Activated CD8-positive, alpha-beta T cell treated with anti-CD3 and anti-CD28 coated beads, Interleukin-2, amount 10 ng/mL, durations not matched to agents 7 days and 5 days (primary cell): ENCODE measurements at regions of chr15 and their contacts with region 1.

Region 1: DNA sequence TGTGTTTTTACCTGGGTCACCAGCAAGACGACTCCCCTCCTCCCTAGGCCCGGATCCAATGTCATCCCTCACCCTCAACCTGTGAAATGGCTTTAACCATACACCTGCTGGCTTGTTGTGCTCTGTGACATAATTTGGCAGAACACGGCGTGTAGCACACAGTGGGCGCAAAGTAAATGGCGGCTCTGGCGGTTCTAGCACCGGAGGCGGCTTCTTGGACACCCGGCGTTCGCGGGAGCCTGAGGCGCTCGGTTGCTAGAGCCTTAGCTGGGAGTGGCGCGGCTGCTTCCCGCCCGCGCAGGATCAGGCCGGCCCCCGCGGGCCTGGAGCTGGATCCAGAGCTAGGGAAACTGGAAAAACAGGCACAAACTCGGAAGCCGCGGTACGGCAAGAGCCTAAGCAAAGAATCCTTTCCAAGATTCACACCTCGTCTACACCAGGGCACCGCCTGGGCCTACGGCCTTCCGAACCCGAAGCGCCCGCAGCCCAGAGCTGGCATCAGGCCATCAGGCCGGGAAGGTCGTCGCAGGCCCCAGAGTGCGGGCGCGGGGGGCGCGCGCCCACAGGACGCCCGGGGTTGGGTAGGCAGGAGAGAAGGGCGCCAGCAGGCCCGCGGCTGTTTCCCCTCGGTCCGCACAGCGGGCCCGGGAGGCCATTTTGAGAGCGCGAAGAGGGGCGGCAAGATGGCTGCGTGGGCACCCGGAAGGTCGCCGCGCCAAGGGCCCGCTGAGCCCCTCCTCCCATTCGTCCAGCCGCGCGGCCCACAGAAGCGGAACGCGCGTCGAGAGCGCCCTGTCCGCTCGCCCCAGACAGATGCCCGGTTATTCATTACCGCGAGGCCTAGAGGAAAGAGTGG is 43.9 kb upstream of the POLG start:
- DNase-seq: no peak
- ATAC-seq: peak; percentile 45
- H3K4me3 Mint-ChIP-seq: peak overlapping the region; percentile 56
- H3K27ac Mint-ChIP-seq: no peak overlapping the region
- H3K4me1 Mint-ChIP-seq: peaks cover 6% of the 10 kb centered on the region
- H3K27me3 Mint-ChIP-seq: peaks cover 81% of the 10 kb centered on the region

Region 2: GRCh38 chr15:89399238-89400120 is 21.0 kb after region 1 on chr15:
- CTCF ChIA-PET with region 1: interaction called, 17 read pairs
- POLR2A ChIA-PET with region 1: no interaction called
- DNase-seq: peak; percentile 53
- ATAC-seq: peak; percentile 61
- H3K4me3 Mint-ChIP-seq: peak overlapping the region; percentile 69
- H3K27ac Mint-ChIP-seq: peak overlapping the region; percentile 52
- H3K4me1 Mint-ChIP-seq: peaks cover 19% of the 10 kb centered on the region
- H3K27me3 Mint-ChIP-seq: peaks cover 61% of the 10 kb centered on the region